Endothelial cell of umbilical vein (primary cell): ENCODE measurements at regions of chr12 and their contacts with region 1.

Region 1: GRCh38 chr12:88897723-88898122 is 317.5 kb upstream of the KITLG start:
- DNase-seq: peak; percentile 95
- H3K4me3 ChIP-seq: no peak overlapping the region
- H3K27ac ChIP-seq: peak overlapping the region; percentile 98
- H3K4me1 ChIP-seq: peaks cover 31% of the 10 kb centered on the region
- H3K27me3 ChIP-seq: no peaks in the 10 kb centered on the region
- CTCF ChIP-seq: no peak
- POLR2A ChIP-seq: no peak

Region 2: GRCh38 chr12:88111074-88111652 is 786.6 kb before region 1 on chr12:
- CTCF ChIA-PET with region 1: no interaction called
- POLR2A ChIA-PET with region 1: no interaction called
- dilution Hi-C with region 1: no loop called
- intact Hi-C with region 1: loop called (anchors 1 kb)
- DNase-seq: peak; percentile 67
- H3K4me3 ChIP-seq: peak overlapping the region in 1 of 3 experiments; percentile 61
- H3K27ac ChIP-seq: peak overlapping the region; percentile 20
- H3K4me1 ChIP-seq: peaks cover 5% of the 10 kb centered on the region
- H3K27me3 ChIP-seq: no peaks in the 10 kb centered on the region
- CTCF ChIP-seq: peak in 1 of 2 donors; percentile 2
- POLR2A ChIP-seq: no peak

Region 3: GRCh38 chr12:88308825-88309224 is 588.9 kb before region 1 on chr12:
- CTCF ChIA-PET with region 1: no interaction called
- POLR2A ChIA-PET with region 1: no interaction called
- dilution Hi-C with region 1: no loop called
- intact Hi-C with region 1: loop called (anchors 1 kb)
- DNase-seq: peak; percentile 65
- H3K4me3 ChIP-seq: no peak overlapping the region
- H3K27ac ChIP-seq: peak overlapping the region; percentile 88
- H3K4me1 ChIP-seq: peaks cover 27% of the 10 kb centered on the region
- H3K27me3 ChIP-seq: no peaks in the 10 kb centered on the region
- CTCF ChIP-seq: no peak
- POLR2A ChIP-seq: no peak

Region 4: GRCh38 chr12:88600272-88600671 is 297.5 kb before region 1 on chr12:
- CTCF ChIA-PET with region 1: no interaction called
- POLR2A ChIA-PET with region 1: no interaction called
- dilution Hi-C with region 1: no loop called
- intact Hi-C with region 1: no loop called
- DNase-seq: no peak
- H3K4me3 ChIP-seq: no peak overlapping the region
- H3K27ac ChIP-seq: no peak overlapping the region
- H3K4me1 ChIP-seq: no peaks in the 10 kb centered on the region
- H3K27me3 ChIP-seq: no peaks in the 10 kb centered on the region
- CTCF ChIP-seq: no peak
- POLR2A ChIP-seq: no peak

Region 5: DNA sequence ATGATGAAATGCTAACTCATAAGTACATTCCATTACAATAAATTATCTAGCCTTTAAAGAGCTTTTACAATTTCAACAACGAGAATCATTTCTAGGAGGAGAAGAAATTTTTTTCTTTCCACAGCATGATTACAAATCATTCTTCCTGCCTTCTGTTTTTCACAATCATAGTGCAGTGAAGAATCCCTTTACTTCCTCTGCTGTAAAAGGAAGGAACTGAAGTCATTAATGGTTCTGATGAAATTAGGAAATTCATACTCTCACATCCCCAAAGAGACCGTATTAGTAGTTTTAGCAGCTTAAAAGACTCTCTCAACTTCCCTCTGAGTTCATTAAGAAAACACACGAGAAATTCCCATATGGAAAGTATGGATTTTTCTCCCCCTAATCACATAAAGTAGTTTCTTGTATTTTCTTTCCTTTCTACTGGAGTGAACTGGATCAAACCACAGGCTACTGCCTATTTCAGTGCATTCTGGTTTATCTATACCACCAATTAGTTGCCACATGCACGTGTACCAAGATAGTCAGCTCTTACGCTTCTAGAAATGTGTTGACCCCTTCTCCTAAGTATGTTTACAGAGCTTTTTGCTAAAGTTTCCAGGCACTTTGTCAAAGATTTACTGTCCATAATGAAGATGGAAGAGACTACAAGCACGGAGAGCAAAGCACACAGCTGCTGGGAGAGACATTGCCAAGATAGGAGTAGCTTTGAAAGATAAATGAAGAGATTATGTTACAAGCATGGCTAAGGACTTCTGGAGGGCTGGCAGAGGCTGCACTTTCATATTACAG is 258.6 kb before region 1 on chr12:
- CTCF ChIA-PET with region 1: interaction called, 4 read pairs
- POLR2A ChIA-PET with region 1: no interaction called
- dilution Hi-C with region 1: no loop called
- intact Hi-C with region 1: loop called (anchors 1 kb)
- DNase-seq: peak; percentile 60
- H3K4me3 ChIP-seq: no peak overlapping the region
- H3K27ac ChIP-seq: peak overlapping the region; percentile 59
- H3K4me1 ChIP-seq: peaks cover 16% of the 10 kb centered on the region
- H3K27me3 ChIP-seq: no peaks in the 10 kb centered on the region
- CTCF ChIP-seq: no peak
- POLR2A ChIP-seq: no peak

Region 6: GRCh38 chr12:88753066-88753465 is 144.7 kb before region 1 on chr12:
- CTCF ChIA-PET with region 1: no interaction called
- POLR2A ChIA-PET with region 1: no interaction called
- dilution Hi-C with region 1: no loop called
- intact Hi-C with region 1: no loop called
- DNase-seq: peak; percentile 76
- H3K4me3 ChIP-seq: no peak overlapping the region
- H3K27ac ChIP-seq: no peak overlapping the region
- H3K4me1 ChIP-seq: peaks cover 3% of the 10 kb centered on the region
- H3K27me3 ChIP-seq: no peaks in the 10 kb centered on the region
- CTCF ChIP-seq: no peak
- POLR2A ChIP-seq: no peak

Region 7: GRCh38 chr12:88960213-88960878 is 62.6 kb after region 1 on chr12:
- CTCF ChIA-PET with region 1: interaction called, 8 read pairs
- POLR2A ChIA-PET with region 1: no interaction called
- dilution Hi-C with region 1: no loop called
- intact Hi-C with region 1: loop called (anchors 1 kb)
- DNase-seq: peak; percentile 84
- H3K4me3 ChIP-seq: no peak overlapping the region
- H3K27ac ChIP-seq: peak overlapping the region; percentile 60
- H3K4me1 ChIP-seq: peaks cover 14% of the 10 kb centered on the region
- H3K27me3 ChIP-seq: no peaks in the 10 kb centered on the region
- CTCF ChIP-seq: no peak
- POLR2A ChIP-seq: no peak

Region 8: GRCh38 chr12:89373763-89374572 is 476.2 kb after region 1 on chr12:
- CTCF ChIA-PET with region 1: no interaction called
- POLR2A ChIA-PET with region 1: no interaction called
- dilution Hi-C with region 1: no loop called
- intact Hi-C with region 1: loop called (anchors 1 kb)
- DNase-seq: peak; percentile 90
- H3K4me3 ChIP-seq: no peak overlapping the region
- H3K27ac ChIP-seq: peak overlapping the region; percentile 90
- H3K4me1 ChIP-seq: peaks cover 78% of the 10 kb centered on the region
- H3K27me3 ChIP-seq: no peaks in the 10 kb centered on the region
- CTCF ChIP-seq: no peak
- POLR2A ChIP-seq: no peak